ENCODE measurements at regions of chr10 and their contacts with region 1.

Region 1: DNA sequence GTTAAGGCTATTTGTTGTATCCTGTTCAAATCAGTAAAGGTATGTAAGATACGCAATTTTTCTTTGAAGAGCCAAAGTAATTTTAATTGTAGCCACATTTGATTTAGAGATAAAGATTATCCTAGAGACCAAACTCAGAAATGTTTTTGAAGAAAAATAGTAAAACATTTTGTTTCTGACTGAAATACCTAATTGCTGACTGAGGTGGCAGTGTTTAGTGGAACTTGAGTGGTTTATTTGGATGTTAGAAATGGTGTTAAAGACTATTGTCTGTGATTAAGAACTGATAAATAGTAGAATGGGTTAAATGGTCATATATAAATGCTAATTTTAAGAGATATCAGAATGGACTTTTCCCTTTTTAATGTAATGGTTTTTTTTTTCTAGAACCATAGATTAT is 15.3 kb downstream of the EDRF1 start:
- DNase-seq: no peak
- ATAC-seq: no peak

Region 2: DNA sequence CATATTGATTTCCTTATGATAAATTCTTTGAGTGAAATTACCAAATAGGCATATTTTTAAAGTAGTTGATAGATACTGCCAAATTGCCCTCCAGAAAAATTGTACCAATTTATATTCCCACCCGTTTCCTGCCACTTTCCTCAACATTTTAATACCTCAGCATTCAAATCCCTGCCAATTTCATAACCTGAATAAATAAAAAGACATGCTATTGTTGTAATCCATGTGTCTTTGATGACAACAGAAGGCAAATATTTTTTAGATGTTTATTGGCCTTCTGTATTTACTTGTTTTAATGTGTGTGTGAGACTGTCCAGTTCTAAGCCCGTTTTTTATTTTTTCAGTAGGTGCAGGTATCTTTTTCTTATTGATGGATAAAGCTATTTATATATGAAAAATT is 123.6 kb before region 1 on chr10:
- intact Hi-C with region 1: no loop called
- DNase-seq: no peak
- ATAC-seq: no peak

Region 3: DNA sequence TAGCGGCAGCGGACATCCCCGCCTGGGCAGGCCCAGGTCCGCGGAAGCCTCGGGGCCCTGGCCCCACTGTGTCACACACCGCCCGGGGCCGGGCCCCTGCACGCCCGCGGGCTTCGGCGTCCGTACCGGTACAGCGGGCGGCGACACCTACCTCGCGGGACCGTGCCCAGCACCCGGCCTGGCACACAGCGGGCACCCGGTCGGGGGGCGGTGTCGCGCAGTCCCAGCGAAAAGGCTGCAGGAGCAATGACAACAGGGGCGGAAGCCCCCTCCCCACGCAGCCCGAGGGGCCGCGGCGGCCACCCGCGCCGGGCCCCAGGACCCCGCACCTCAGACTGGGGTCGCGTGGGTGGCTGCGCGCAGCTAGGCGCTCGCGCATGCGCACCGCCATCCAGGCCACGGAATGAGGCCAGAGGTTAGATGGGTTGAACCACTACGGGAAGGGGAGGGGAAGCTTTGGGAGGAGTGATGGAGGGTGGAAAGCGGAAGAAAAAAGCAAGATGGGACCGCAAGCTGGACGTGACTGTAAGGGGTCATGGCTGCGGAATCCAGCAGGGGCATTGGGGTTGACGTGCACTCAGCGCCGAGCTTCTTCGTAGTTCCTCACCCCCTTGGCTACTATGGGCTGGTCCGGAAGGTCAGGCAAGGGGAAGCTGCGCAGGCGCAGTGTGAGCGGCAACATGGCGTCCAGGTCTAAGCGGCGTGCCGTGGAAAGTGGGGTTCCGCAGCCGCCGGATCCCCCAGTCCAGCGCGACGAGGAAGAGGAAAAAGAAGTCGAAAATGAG is 88.2 kb after region 1 on chr10 and contains the starts of genes BCCIP and UROS:
- intact Hi-C with region 1: loop called (anchors 10 kb)
- DNase-seq: peak; percentile 96
- ATAC-seq: peak; percentile 98
- total RNA-seq, gene BCCIP: 38.4 TPM
- total RNA-seq, gene UROS: 73.9 TPM